Mammary epithelial cell (primary cell): ENCODE measurements at regions of chr10 and their contacts with region 1.

Region 1: DNA sequence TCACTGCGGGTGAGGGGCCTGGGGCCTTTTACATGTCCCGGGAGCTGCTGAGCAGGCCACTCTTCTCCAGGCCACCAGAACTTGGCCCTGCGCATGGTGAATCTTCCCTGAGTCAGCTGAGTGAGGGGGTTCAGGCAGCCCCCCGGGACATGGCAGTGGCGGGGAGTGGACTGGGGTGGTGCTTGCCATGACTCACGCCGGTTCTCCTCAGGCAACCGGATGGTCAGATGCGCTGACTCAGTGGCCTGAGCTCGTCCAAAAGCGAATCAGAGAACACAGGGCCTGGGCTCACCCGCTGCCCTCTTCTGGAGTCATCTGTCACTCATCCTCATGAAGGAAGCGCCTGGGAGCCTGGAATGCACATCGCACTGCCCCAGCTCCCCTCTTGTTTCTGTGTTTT is 33.5 kb downstream of the HTRA1 start:
- DNase-seq: peak; percentile 87
- H3K4me3 ChIP-seq: peak overlapping the region; percentile 7 to 45 (median 26)
- H3K27ac ChIP-seq: peak overlapping the region; percentile 88
- H3K4me1 ChIP-seq: peaks cover 66% of the 10 kb centered on the region
- H3K27me3 ChIP-seq: no peaks in the 10 kb centered on the region
- CTCF ChIP-seq: no peak

Region 2: DNA sequence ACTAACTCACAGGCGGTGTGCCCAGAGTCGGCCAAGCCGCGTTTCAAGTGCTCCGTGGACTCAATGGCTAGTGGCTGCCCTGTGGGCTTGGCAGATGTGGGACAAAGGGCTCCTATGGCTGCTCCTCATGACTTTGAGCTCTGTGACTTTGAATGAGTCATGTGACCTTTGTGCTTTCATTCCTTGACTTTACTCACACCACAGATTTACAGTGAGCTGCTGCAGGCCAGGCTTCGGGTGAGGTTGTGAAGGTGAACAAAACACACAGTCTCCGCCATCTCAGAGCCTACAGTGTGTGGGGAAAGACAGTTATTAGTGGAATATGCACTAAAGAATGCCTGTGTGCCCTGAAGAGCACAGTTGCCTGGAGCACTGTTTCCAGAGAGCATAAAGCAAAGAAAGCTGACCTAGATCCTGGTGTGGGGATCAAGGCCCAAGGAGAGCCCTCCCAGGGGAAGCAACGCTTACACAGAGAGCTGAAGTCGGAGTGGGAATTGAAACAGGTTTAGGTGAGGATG is 150.0 kb before region 1 on chr10:
- CTCF ChIA-PET with region 1: no interaction called
- dilution Hi-C with region 1: no loop called
- in situ Hi-C with region 1: no loop called
- intact Hi-C with region 1: no loop called
- DNase-seq: no peak
- H3K4me3 ChIP-seq: no peak overlapping the region
- H3K27ac ChIP-seq: no peak overlapping the region
- H3K4me1 ChIP-seq: no peaks in the 10 kb centered on the region
- H3K27me3 ChIP-seq: no peaks in the 10 kb centered on the region
- CTCF ChIP-seq: no peak

Region 3: GRCh38 chr10:122362621-122363020 is 132.2 kb before region 1 on chr10:
- CTCF ChIA-PET with region 1: no interaction called
- dilution Hi-C with region 1: no loop called
- in situ Hi-C with region 1: no loop called
- intact Hi-C with region 1: no loop called
- DNase-seq: peak; percentile 90
- H3K4me3 ChIP-seq: no peak overlapping the region
- H3K27ac ChIP-seq: peak overlapping the region; percentile 78
- H3K4me1 ChIP-seq: peaks cover 32% of the 10 kb centered on the region
- H3K27me3 ChIP-seq: no peaks in the 10 kb centered on the region
- CTCF ChIP-seq: no peak

Region 4: DNA sequence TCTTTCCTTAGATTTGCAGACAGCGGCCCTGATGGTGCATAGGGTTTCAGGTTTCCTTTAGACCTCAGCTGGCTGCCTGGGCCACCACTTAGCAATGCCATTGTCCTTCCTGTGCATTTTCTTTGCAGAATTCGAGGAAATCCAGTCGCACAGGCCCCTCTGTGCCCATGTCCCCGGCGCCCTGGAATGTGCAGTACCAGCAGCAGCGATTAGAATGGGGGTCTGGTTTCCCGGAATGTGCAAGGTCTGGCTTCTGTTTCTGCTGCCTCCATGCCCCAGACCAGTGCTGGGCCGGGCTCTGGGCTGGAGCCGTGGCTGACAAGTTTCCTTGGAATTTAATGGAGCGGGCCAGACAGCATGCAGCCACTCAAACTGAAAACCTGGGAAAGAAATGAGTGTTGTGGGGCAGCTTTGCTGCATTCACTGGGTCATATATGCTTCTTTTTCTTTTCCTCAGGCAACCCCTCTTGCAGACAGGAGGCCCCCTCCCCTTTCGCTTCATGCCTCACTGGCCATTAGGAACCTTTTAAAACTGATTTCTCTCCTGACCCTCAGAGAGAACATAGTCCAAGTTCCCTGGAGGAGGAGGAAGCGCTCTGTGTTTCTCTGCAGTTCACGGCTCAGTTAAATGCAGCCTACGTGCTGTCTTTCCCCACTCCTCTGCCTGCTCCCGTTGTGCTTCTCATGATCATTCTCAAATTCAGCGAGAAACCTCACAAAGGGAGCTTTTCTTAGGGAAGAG is 19.1 kb before region 1 on chr10:
- CTCF ChIA-PET with region 1: no interaction called
- dilution Hi-C with region 1: no loop called
- in situ Hi-C with region 1: no loop called
- intact Hi-C with region 1: loop called (anchors 2 kb)
- DNase-seq: no peak
- H3K4me3 ChIP-seq: no peak overlapping the region
- H3K27ac ChIP-seq: peak overlapping the region; percentile 5
- H3K4me1 ChIP-seq: peaks cover 46% of the 10 kb centered on the region
- H3K27me3 ChIP-seq: no peaks in the 10 kb centered on the region
- CTCF ChIP-seq: no peak

Region 5: DNA sequence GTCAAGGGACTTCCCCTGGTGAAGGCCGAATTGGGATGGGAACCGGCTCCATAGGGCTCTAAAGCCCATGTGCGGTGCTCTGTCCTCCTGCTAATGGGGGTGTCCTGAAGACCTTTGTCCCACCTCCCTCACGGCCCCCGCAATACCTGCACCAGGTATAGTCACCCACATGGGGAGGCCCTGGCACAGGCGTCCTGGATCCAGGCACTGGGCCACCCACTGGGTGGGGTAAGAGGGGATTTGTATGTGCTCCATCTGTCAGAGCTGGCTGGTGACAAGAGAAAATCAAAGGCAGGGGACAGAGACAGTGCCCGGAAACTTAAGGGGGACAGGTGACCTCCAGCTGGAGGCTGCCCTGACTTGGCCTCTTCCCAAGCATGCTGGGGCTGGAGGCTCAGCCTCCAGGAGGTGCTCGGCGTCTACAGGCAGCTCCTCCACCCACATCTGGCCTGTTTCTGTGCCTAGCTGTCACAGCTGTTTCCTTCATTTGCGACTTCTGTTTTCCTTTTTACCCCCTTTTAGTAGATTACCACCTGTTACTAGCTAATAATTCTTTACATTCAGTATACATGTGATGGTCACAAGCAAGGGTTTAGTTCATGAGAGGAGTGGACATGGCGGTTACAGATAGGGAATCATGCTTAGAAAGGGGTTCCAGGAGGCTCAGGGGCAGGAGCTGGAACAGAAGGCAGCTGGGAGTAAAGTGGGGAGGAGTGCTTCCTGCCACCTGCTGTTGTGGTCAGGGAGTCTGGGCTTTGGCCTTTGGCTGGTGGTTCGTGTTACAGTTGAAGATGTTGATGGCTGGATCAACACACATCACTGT is 353.2 kb after region 1 on chr10:
- CTCF ChIA-PET with region 1: no interaction called
- dilution Hi-C with region 1: no loop called
- in situ Hi-C with region 1: no loop called
- intact Hi-C with region 1: no loop called
- DNase-seq: no peak
- H3K4me3 ChIP-seq: no peak overlapping the region
- H3K27ac ChIP-seq: no peak overlapping the region
- H3K4me1 ChIP-seq: peaks cover 7% of the 10 kb centered on the region
- H3K27me3 ChIP-seq: no peaks in the 10 kb centered on the region
- CTCF ChIP-seq: no peak